ENCODE measurements at regions of chr15 and their contacts with region 1.

Region 1: DNA sequence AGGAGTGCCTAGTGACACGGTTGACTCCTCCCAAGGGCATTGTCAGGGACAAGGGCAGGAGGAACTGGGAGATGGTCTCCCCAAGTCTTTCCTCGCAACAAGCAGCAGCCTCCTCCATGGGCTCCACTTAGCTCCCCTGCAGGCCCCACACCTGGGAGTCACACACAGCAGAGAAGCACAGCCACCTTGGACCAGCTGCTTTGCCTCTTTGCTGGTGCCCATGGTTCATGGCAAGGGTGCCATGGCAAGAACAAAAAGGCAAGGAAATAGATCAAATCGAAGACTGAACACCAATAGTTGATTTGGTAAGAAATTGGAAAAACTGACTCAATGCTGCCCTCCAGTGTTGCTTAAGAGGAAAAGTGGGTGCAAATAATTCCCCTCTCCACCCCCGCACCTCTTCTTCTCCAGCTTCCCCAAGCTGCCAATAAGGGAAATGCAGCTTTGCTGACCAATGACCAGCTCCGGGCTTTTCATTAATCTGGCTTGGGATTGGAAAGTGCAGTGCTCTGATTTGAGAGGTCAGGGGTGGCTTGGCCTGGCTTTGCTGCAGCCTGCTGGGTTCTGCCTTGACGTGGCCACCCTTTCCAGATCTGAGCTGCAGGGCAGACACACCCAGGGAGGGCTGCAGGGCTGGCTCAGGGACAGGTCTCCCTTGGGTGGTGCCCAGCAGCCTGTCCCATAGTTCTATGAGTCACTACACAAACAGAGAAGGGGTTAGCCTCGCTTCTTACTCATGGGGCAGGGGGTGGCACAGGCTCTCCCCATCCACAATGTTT is 162.0 kb downstream of the KLF13 start:
- DNase-seq: peak in 6 of 9 experiments; percentile 29 to 88 (median 56)
- ATAC-seq: peak; percentile 59
- H3K4me3 ChIP-seq: no peak overlapping the region
- H3K4me3 Mint-ChIP-seq: no peak overlapping the region
- H3K27ac ChIP-seq: no peak overlapping the region
- H3K27ac Mint-ChIP-seq: no peak overlapping the region
- H3K4me1 ChIP-seq: peaks cover 30% of the 10 kb centered on the region
- H3K4me1 Mint-ChIP-seq: peaks cover 39% of the 10 kb centered on the region
- H3K27me3 ChIP-seq: no peaks in the 10 kb centered on the region
- H3K27me3 Mint-ChIP-seq: no peaks in the 10 kb centered on the region
- CTCF ChIP-seq: peak; percentile 88

Region 2: GRCh38 chr15:30991255-30992072 is 497.2 kb before region 1 on chr15 and contains the start of gene MTMR10:
- CTCF ChIA-PET with region 1: interaction called, 3 read pairs
- POLR2A ChIA-PET with region 1: no interaction called
- intact Hi-C with region 1: loop called (anchors 5 to 10 kb)
- DNase-seq: peak; percentile 62 to 86 (median 69)
- ATAC-seq: peak; percentile 93
- H3K4me3 ChIP-seq: peak within 1 kb of the TSS; percentile 71 to 93
- H3K4me3 Mint-ChIP-seq: peak within 1 kb of the TSS; percentile 94
- H3K27ac ChIP-seq: peak within 1 kb of the TSS; percentile 75 to 77
- H3K27ac Mint-ChIP-seq: peak within 1 kb of the TSS; percentile 95
- H3K4me1 ChIP-seq: peaks cover 26% of the 10 kb centered on the region
- H3K4me1 Mint-ChIP-seq: peaks cover 34% of the 10 kb centered on the region
- H3K27me3 ChIP-seq: no peaks in the 10 kb centered on the region
- H3K27me3 Mint-ChIP-seq: no peaks in the 10 kb centered on the region
- CTCF ChIP-seq: no peak
- total RNA-seq, gene MTMR10: 54.7 to 56.4 TPM

Region 3: DNA sequence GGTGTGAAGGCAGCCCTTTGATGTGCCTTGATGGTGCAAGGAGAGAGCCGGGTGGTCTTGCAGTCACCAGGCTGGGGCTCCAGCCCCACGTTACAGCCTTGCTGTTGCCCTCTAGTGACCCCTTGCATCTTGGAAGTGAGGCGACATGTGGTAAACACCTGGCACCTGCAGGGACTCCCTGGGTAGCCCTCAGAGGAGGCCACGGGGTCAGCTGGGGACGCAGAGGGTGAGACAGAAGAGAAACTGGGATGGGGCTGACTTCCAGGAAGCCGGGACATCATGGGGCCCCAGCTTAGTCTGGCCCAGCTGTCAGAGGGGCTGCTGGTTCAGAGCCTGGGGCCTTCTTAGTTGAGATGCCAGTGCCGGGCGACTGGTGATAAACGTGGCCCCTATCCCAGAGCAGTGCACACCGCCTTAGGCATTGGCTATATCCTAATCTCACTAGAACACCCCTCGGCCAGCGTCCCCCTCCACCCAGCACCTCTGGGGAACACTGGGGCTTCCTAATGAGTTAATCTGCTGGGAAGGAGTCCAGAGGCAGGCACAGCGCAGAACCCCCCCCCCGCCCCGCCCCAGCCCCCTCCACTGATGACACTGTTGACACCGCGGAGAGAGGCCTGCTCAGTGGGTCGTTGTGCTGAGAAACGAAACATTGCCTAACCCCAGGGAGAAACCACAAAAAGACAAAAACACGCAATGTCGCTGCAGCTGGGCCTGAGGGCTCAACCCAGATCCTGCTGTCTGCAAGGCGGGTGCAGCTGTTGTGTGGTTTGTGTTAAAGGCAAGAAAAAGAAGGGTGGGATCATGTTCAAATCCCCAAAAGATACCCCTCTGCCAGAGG is 222.5 kb before region 1 on chr15:
- CTCF ChIA-PET with region 1: interaction called, 53 read pairs
- POLR2A ChIA-PET with region 1: interaction called, 3 read pairs
- intact Hi-C with region 1: loop called (anchors 2 to 5 kb)
- DNase-seq: peak; percentile 51 to 90 (median 77)
- ATAC-seq: peak; percentile 81
- H3K4me3 ChIP-seq: peak overlapping the region in 1 of 2 experiments; percentile 42
- H3K4me3 Mint-ChIP-seq: peak overlapping the region; percentile 71
- H3K27ac ChIP-seq: peak overlapping the region; percentile 71 to 72
- H3K27ac Mint-ChIP-seq: peak overlapping the region; percentile 95
- H3K4me1 ChIP-seq: peaks cover 69% of the 10 kb centered on the region
- H3K4me1 Mint-ChIP-seq: peaks cover 96% of the 10 kb centered on the region
- H3K27me3 ChIP-seq: no peaks in the 10 kb centered on the region
- H3K27me3 Mint-ChIP-seq: no peaks in the 10 kb centered on the region
- CTCF ChIP-seq: no peak

Region 4: DNA sequence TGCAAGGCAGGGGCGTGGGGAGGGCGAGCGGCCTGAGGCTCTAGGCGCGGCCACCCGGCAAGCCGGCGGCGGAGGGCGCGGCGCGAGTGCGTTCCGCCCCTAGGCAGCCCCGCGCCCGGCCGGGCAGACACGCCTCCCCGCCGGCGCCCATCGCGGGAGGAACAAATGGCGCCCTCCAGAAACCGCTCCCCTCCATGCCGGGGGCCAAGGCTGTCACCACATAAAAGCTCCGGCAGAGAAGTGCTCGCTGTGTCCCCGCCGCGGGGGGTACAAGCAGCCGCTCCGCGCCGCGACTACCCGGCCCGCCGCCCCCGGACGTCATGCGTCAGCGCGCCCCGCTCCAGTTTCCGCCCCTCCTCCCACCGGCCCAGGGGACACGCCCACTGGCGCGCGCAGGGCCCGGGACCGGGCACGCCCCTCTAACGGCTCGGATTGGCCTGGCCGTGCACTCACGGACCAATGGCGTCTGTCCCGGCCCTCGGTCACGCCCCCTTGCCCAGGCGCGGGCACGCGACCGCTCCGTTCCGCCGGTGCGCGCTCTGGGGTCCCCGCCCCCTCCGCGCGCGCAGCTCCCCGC is 162.4 kb before region 1 on chr15:
- CTCF ChIA-PET with region 1: interaction called, 9 read pairs
- POLR2A ChIA-PET with region 1: interaction called, 22 read pairs
- intact Hi-C with region 1: loop called (anchors 1 to 2 kb)
- DNase-seq: peak; percentile 99 to 100 (median 100)
- ATAC-seq: peak; percentile 73
- H3K4me3 ChIP-seq: peak overlapping the region; percentile 55 to 82
- H3K4me3 Mint-ChIP-seq: peak overlapping the region; percentile 85
- H3K27ac ChIP-seq: peak overlapping the region; percentile 81 to 96
- H3K27ac Mint-ChIP-seq: peak overlapping the region; percentile 97
- H3K4me1 ChIP-seq: peaks cover 43% of the 10 kb centered on the region
- H3K4me1 Mint-ChIP-seq: peaks cover 60% of the 10 kb centered on the region
- H3K27me3 ChIP-seq: no peaks in the 10 kb centered on the region
- H3K27me3 Mint-ChIP-seq: no peaks in the 10 kb centered on the region
- CTCF ChIP-seq: no peak

Region 5: DNA sequence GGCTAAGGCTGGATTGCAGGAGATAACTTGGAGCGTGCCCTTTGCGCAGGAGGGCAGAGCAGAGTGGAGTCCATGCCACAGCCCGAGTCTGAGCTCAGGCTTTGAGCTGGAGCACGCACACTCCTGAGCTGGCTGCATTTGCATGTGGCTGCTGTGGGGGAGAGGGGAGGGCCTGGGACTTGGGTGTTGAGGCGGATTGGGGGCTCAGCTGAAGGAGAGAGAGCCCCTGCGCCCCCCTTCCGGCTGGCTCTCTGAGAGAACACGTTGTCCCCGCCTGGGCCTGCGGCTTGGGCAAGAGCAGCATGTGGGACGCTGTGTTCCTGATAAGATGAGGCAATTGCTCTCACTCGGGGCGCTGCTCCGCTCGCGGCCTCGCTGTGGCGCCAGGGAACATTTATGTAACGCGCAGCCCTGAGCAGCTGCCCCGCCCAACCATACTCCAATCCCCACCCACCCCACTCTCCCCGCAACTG is 122.9 kb before region 1 on chr15:
- CTCF ChIA-PET with region 1: interaction called, 137 read pairs
- POLR2A ChIA-PET with region 1: interaction called, 38 read pairs
- intact Hi-C with region 1: loop called (anchors 1 kb)
- DNase-seq: peak; percentile 59 to 92 (median 84)
- ATAC-seq: peak; percentile 47
- H3K4me3 ChIP-seq: peak overlapping the region; percentile 32 to 59
- H3K4me3 Mint-ChIP-seq: peak overlapping the region; percentile 81
- H3K27ac ChIP-seq: peak overlapping the region; percentile 68 to 93
- H3K27ac Mint-ChIP-seq: peak overlapping the region; percentile 97
- H3K4me1 ChIP-seq: peaks cover 97% of the 10 kb centered on the region
- H3K4me1 Mint-ChIP-seq: peaks cover 96% of the 10 kb centered on the region
- H3K27me3 ChIP-seq: no peaks in the 10 kb centered on the region
- H3K27me3 Mint-ChIP-seq: no peaks in the 10 kb centered on the region
- CTCF ChIP-seq: peak; percentile 57

Region 6: DNA sequence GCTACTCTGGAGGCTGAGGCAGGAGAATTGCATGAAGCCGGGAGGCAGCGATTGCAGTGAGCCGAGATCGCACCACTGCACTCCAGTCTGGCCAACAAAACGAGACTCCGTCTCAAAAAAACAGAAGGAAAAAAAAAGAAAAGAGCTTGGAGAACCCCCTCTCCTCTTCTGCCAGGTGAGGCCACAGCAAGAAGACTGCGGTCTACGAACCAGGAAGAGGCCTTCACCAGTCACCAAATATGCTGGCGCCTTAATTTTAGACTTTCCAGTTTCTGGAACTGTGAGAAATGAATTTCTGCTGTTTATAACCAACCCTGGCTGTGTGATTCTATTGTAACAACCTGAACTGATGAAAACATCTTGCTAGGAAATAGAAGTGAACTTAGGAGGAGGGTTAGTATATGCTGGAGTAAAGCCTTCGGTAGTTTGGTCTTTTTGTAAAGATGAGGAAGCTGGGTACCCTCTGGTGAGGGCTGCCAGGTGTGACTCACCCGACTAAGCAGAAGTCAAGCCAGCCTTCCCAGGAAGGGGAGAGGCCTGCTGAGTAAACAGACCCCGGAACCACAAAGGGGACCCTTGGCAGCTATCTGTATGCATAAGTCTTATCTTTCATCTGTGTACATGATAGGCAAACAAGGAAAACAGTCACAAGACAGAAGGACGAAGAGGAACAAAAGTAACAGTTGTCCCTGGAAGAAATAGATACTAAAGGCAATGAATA is 83.3 kb before region 1 on chr15:
- CTCF ChIA-PET with region 1: interaction called, 23 read pairs
- POLR2A ChIA-PET with region 1: no interaction called
- intact Hi-C with region 1: no loop called
- DNase-seq: peak in 3 of 9 experiments; percentile 46 to 52 (median 46)
- ATAC-seq: peak; percentile 70
- H3K4me3 ChIP-seq: no peak overlapping the region
- H3K4me3 Mint-ChIP-seq: no peak overlapping the region
- H3K27ac ChIP-seq: peak overlapping the region; percentile 6 to 46
- H3K27ac Mint-ChIP-seq: peak overlapping the region; percentile 62
- H3K4me1 ChIP-seq: peaks cover 19% of the 10 kb centered on the region
- H3K4me1 Mint-ChIP-seq: peaks cover 18% of the 10 kb centered on the region
- H3K27me3 ChIP-seq: no peaks in the 10 kb centered on the region
- H3K27me3 Mint-ChIP-seq: no peaks in the 10 kb centered on the region
- CTCF ChIP-seq: no peak

Region 7: DNA sequence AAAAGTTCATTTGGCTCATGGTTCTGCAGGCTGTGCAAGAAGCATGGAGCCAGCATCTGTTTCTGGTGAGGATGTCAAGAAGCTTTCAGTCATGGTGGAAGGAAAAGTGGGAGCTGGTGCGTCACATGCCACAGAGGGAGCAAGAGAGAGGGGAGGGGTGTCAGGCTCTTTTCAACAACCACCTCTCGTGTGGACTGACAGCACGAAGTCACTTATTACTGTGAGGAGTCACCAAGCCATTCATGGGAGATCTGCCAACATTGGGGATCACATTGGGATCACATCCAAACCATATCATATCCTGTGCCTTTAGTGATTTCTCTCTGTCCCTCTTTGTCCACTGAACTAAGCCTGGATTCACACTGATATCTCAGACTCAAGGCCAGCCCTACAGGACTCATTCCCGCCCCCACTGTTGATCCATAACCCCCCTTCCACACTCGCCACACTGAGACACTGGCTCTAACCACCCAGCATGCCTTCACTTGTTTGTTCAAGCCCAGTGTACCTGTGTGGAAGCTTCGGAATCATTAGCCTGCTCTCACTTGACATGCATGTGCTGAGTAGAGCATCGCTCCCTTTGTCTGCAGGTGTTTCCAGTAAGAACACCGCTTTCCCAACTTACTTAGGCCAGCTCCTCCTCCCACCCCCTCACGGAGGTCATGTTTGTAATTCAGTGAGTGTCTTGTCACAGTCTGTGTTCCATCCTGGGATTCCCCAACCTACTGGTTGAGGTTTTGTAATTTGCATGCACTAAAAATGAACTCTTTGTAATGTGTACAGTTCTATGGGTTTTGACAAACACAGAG is 29.8 kb before region 1 on chr15:
- CTCF ChIA-PET with region 1: interaction called, 27 read pairs
- POLR2A ChIA-PET with region 1: no interaction called
- intact Hi-C with region 1: no loop called
- DNase-seq: peak in 2 of 9 experiments; percentile 26 to 62
- ATAC-seq: peak; percentile 86
- H3K4me3 ChIP-seq: no peak overlapping the region
- H3K4me3 Mint-ChIP-seq: peak overlapping the region; percentile 4
- H3K27ac ChIP-seq: no peak overlapping the region
- H3K27ac Mint-ChIP-seq: peak overlapping the region; percentile 70
- H3K4me1 ChIP-seq: peaks cover 8% of the 10 kb centered on the region
- H3K4me1 Mint-ChIP-seq: peaks cover 20% of the 10 kb centered on the region
- H3K27me3 ChIP-seq: no peaks in the 10 kb centered on the region
- H3K27me3 Mint-ChIP-seq: no peaks in the 10 kb centered on the region
- CTCF ChIP-seq: no peak

Measured in CD8-positive, alpha-beta T cell (primary cell).